ENCODE measurements at regions of chr17 and their contacts with region 1.

Region 1: DNA sequence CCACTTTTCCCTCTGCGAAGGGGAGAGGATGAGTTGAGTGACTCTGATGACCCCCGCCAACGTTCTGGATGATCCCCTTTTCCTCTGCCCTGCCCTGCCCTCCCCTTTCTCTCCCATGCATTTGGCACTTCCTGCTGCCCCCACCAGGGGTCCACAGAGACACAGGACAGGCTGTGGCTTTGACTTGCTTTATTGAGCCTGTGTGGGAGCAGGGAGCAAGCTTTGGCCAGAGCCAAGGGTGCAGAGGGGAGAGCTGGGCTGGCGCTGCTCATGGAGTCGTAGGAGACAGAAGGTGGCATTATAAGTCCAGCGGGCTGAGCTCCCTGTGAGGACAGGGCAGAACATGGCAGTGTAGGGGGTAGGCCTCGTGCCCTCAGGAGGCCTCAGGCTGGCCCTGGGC is 1.6 kb downstream of the PPY start:
- DNase-seq: peak; percentile 73
- ATAC-seq: peak; percentile 87
- H3K4me3 ChIP-seq: no peak overlapping the region
- H3K27ac ChIP-seq: no peak overlapping the region
- H3K4me1 ChIP-seq: peaks cover 5% of the 10 kb centered on the region
- H3K27me3 ChIP-seq: peaks cover 18 to 73% of the 10 kb centered on the region in 2 experiments
- CTCF ChIP-seq: peak; percentile 93
- EP300 ChIP-seq: no peak
- POLR2A ChIP-seq: no peak
- RAD21 ChIP-seq: peak; percentile 86

Region 2: DNA sequence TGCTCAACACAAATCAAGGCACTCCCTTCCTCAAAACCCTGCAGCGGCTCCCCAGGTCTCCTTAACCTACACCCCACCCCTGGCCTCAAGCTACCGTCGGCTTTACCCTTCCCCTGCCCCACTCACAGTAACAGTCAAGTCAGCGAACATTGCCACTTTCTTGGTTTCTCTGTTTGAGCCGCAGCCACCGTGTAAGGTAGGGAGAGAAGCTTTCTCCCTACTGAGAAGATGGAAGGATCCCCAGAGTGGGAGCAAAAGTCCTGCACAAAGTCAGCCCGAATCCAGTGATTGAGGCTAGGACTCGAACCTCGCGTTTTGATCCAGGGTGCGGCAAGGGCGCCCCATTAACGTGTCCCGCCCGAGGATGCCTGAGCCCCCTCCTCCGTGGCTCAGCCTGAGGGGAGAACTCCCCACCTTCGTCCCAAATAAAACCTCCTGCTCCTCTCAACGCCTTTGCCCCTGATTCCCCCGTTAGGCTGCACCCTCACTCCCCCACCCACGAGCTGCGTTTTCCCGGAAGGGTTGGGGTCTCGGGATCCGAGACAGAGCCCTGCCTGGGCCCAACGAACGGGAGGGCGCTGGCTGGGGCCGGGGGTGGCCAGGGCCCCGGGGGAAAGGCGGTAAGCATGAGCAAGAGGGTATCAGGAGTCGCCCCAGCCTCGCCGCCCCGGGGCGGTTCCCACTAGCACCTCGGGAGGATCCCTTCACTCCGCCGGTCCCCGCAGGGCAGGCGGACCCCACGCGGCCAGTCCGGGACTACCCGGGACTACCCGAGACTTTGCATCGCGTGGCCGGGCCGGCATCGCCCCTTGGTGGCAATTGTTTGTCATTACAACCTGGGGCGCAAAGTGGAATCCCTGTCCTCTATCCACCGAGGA is 53.9 kb after region 1 on chr17:
- CTCF ChIA-PET with region 1: interaction called, 128 read pairs
- POLR2A ChIA-PET with region 1: interaction called, 3 read pairs
- in situ Hi-C with region 1: loop called (anchors 5 kb)
- intact Hi-C with region 1: loop called (anchors 1 kb)
- DNase-seq: peak; percentile 54
- ATAC-seq: peak; percentile 90
- H3K4me3 ChIP-seq: peak overlapping the region in 2 of 3 experiments; percentile 13 to 60; a peak in 4 of 6 replicates
- H3K27ac ChIP-seq: no peak overlapping the region
- H3K4me1 ChIP-seq: peaks cover 26% of the 10 kb centered on the region
- H3K27me3 ChIP-seq: peaks cover 5 to 43% of the 10 kb centered on the region in 2 experiments; a peak in 4 of 5 replicates
- CTCF ChIP-seq: peak; percentile 99
- EP300 ChIP-seq: no peak
- POLR2A ChIP-seq: no peak
- RAD21 ChIP-seq: peak; percentile 99

Region 3: GRCh38 chr17:44044067-44044466 is 103.4 kb after region 1 on chr17:
- CTCF ChIA-PET with region 1: interaction called, 13 read pairs
- POLR2A ChIA-PET with region 1: interaction called, 4 read pairs
- in situ Hi-C with region 1: loop called (anchors 10 kb)
- intact Hi-C with region 1: loop called (anchors 1 kb)
- DNase-seq: no peak
- ATAC-seq: no peak
- H3K4me3 ChIP-seq: no peak overlapping the region
- H3K27ac ChIP-seq: no peak overlapping the region
- H3K4me1 ChIP-seq: peaks cover 11% of the 10 kb centered on the region
- H3K27me3 ChIP-seq: no peaks in the 10 kb centered on the region
- CTCF ChIP-seq: no peak
- EP300 ChIP-seq: no peak
- POLR2A ChIP-seq: no peak
- RAD21 ChIP-seq: no peak